Heart left ventricle (tissue), 16 donors: ENCODE measurements at regions of chr18 and their contacts with region 1.

Region 1: DNA sequence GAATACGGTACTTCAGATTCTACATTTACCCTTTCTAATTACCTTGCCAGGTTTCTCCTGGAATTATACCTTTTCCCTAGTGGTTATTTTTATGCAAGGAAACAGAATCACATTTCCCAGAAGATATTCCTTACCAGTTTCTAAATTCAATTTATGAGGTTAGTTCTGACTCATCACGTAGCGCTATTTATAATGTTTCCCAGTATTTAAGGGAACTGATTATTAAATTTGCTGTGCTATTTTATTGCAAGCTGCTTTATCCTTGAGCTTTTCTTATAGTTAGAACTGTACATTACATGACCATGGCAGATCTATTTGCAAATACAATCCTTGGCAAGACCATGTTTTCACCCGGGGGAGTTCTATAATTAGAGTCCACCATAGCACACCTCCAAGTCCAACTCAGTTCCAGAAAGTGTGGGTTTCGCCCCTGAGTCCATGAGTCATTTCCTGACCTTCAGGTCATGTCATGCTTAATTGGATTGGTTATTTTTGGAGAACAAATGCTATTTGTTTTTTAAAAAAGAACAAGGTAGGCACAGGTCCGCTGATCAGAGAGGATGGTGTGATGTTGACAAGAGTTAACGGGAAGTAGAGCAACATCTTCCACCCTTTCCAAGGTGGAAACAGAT is 126.6 kb downstream of the ZNF532 start:
- DNase-seq: no peak
- ATAC-seq: peak; percentile 18 to 64 (median 60)
- H3K4me3 ChIP-seq: no peak overlapping the region
- H3K27ac ChIP-seq: peak overlapping the region in 11 of 12 donors; percentile 58 to 95 (median 82)
- H3K4me1 ChIP-seq: peaks cover 14 to 65% (median 48%) of the 10 kb centered on the region in 12 donors
- H3K27me3 ChIP-seq: no peaks in the 10 kb centered on the region
- CTCF ChIP-seq: peak in 2 of 12 donors; percentile 8 to 26
- POLR2A ChIP-seq: no peak

Region 2: DNA sequence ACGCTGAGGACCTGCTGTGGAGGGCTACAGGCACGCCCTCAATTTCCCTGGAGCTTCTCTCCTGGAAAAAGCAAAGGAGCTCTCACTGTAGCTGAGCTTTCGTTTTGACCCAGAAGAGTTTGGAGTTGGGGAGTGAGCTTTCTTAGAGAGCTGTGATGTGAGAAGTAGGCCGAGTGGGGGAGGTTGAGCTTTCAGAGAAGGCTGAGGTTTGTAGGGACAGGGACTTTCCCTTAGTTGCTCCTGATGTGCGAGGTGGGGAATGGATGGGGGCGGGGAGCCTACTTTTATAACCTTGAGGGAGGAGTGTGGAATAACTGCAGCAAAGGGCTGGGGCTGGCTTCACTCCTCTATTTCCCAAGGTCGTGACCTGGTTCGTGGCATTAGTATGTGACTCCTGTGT is 79.5 kb before region 1 on chr18:
- intact Hi-C with region 1: loop called in 1 of 10 experiments (anchors 5 kb)
- DNase-seq: peak in 2 of 5 donors; percentile 37 to 54
- ATAC-seq: peak in 3 of 4 donors; percentile 51 to 79 (median 61)
- H3K4me3 ChIP-seq: peak overlapping the region in 4 of 12 donors; percentile 10 to 17 (median 17)
- H3K27ac ChIP-seq: peak overlapping the region; percentile 14 to 84 (median 79)
- H3K4me1 ChIP-seq: peaks cover 5 to 72% (median 45%) of the 10 kb centered on the region in 12 donors
- H3K27me3 ChIP-seq: no peaks in the 10 kb centered on the region
- CTCF ChIP-seq: no peak
- POLR2A ChIP-seq: no peak

Region 3: DNA sequence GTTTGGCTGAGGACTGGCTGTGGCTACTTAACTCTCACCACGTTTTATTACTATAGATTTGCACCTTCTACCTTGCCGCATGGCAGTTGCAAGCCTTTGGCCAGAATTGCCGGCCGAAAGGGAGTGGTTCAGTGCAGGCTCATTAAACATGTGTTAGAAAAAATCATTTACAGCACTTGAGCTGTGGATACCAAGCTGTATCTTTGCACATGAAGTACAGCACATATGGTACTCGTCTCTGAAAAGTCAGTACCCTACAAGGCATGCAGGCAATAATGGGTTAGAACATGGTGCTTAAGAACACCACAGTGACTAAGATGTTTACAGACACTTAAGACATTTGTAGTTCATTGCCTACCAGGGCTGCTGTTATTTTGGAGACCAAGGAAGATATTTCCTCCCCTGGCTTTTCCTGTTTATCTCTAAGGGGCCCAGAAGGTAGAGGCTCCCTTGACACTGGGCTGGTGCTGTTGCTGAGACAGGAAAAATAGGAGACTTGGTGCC is 23.5 kb before region 1 on chr18:
- intact Hi-C with region 1: loop called in 1 of 10 experiments (anchors 2 kb)
- DNase-seq: no peak
- ATAC-seq: peak; percentile 8 to 57 (median 15)
- H3K4me3 ChIP-seq: no peak overlapping the region
- H3K27ac ChIP-seq: peak overlapping the region in 9 of 12 donors; percentile 5 to 63 (median 30)
- H3K4me1 ChIP-seq: peaks cover 0 to 48% (median 35%) of the 10 kb centered on the region in 12 donors
- H3K27me3 ChIP-seq: no peaks in the 10 kb centered on the region
- CTCF ChIP-seq: no peak
- POLR2A ChIP-seq: no peak